Activated CD4-positive, alpha-beta memory T cell treated with anti-CD3 and anti-CD28 coated beads for 36 hours (primary cell): ENCODE measurements at regions of chr7 and their contacts with region 1.

Region 1: DNA sequence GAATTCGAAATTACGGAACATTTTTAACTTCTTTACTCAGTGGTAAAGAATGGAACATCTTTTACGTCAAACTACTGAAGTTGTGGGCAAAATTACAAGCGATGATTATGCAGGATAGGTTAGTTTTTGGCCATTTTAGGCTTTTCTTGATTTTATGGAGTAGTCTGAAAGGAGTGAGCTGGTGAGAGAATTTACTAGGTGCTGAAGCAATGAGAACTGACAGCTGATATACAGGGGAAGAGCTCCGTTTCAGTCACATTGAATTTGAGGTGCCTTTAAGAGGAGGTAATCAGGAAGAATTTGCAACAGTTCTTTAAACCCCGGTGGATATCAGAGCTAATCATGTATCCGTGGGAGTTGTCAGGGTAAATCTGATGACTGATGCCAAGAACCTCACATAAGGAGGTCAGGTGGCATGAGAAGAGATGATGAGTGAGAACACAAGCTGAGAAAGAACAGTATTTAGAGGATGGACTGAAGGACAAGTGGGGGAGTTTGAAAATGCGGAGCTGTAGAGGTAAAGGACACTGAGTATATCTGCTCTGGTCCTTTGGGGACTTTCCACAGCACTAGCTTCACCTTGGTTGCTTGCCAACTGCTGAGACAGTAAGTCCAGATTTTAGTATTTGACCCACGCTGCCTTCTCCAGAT is 104.3 kb downstream of the AHR start:
- DNase-seq: peak; percentile 49
- H3K4me3 Mint-ChIP-seq: peak overlapping the region; percentile 53
- H3K27ac Mint-ChIP-seq: peak overlapping the region; percentile 92
- H3K4me1 Mint-ChIP-seq: peaks cover 44% of the 10 kb centered on the region
- H3K27me3 Mint-ChIP-seq: peaks cover 8% of the 10 kb centered on the region

Region 2: GRCh38 chr7:16619979-16620408 is 782.8 kb before region 1 on chr7:
- CTCF ChIA-PET with region 1: no interaction called
- POLR2A ChIA-PET with region 1: no interaction called
- intact Hi-C with region 1: loop called (anchors 1 kb)
- DNase-seq: no peak
- H3K4me3 Mint-ChIP-seq: peak overlapping the region; percentile 0
- H3K27ac Mint-ChIP-seq: peak overlapping the region; percentile 63
- H3K4me1 Mint-ChIP-seq: peaks cover 10% of the 10 kb centered on the region
- H3K27me3 Mint-ChIP-seq: no peaks in the 10 kb centered on the region

Region 3: DNA sequence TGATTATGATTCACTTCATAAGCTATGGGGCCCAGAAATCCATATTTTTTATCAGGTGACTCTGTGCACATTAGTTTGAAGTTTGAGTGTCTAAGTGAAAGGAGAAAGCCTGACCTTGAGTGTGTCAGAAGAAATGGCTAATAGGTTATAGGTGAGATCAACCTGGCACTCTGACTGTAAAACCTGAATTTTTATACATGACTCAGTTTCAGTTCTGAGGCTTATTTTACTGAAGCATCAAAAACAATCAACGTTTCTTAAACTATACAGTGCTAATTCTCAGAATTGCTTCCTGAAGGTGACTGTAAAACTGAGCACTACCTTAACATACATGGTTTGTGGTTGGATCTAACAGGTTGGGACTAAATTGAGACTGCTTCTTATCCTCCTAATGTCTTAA is 263.7 kb before region 1 on chr7:
- CTCF ChIA-PET with region 1: interaction called, 3 read pairs
- POLR2A ChIA-PET with region 1: no interaction called
- intact Hi-C with region 1: loop called (anchors 2 kb)
- DNase-seq: no peak
- H3K4me3 Mint-ChIP-seq: no peak overlapping the region
- H3K27ac Mint-ChIP-seq: peak overlapping the region; percentile 82
- H3K4me1 Mint-ChIP-seq: peaks cover 70% of the 10 kb centered on the region
- H3K27me3 Mint-ChIP-seq: no peaks in the 10 kb centered on the region

Region 4: GRCh38 chr7:17255926-17256325 is 146.8 kb before region 1 on chr7:
- CTCF ChIA-PET with region 1: no interaction called
- POLR2A ChIA-PET with region 1: no interaction called
- intact Hi-C with region 1: loop called (anchors 1 kb)
- DNase-seq: no peak
- H3K4me3 Mint-ChIP-seq: no peak overlapping the region
- H3K27ac Mint-ChIP-seq: no peak overlapping the region
- H3K4me1 Mint-ChIP-seq: peaks cover 21% of the 10 kb centered on the region
- H3K27me3 Mint-ChIP-seq: no peaks in the 10 kb centered on the region

Region 5: GRCh38 chr7:17492437-17492836 is 89.7 kb after region 1 on chr7:
- CTCF ChIA-PET with region 1: no interaction called
- POLR2A ChIA-PET with region 1: interaction called, 3 read pairs
- intact Hi-C with region 1: loop called (anchors 1 kb)
- DNase-seq: no peak
- H3K4me3 Mint-ChIP-seq: no peak overlapping the region
- H3K27ac Mint-ChIP-seq: no peak overlapping the region
- H3K4me1 Mint-ChIP-seq: peaks cover 11% of the 10 kb centered on the region
- H3K27me3 Mint-ChIP-seq: no peaks in the 10 kb centered on the region

Region 6: DNA sequence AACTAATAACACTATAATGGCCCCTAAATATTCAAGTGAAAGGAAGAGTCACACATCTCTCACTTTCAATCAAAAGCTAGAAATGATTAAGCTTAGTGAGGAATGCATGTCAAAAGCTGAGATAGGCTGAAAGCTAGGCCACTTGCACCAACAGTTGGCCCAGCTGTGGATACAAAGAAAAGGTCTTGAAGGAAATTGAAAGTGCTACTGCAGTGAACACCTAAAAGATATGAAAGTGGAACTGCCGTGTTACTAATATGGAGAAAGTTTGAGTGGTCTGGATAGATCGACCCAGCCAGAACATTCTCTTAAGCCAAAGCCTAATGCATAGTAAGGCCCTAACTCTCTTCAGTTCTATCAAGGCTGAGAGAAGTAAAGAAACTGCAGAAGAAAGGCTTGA is 549.6 kb after region 1 on chr7:
- CTCF ChIA-PET with region 1: no interaction called
- POLR2A ChIA-PET with region 1: no interaction called
- intact Hi-C with region 1: loop called (anchors 5 kb)
- DNase-seq: peak; percentile 63
- H3K4me3 Mint-ChIP-seq: peak overlapping the region; percentile 28
- H3K27ac Mint-ChIP-seq: peak overlapping the region; percentile 44
- H3K4me1 Mint-ChIP-seq: peaks cover 23% of the 10 kb centered on the region
- H3K27me3 Mint-ChIP-seq: peaks cover 3% of the 10 kb centered on the region